ENCODE measurements at regions of chr12 and their contacts with region 1.

Region 1: GRCh38 chr12:48758221-48758620 is 30.7 kb downstream of the ADCY6 start:
- DNase-seq: no peak
- H3K4me3 ChIP-seq: no peak overlapping the region
- H3K27ac ChIP-seq: no peak overlapping the region
- H3K4me1 ChIP-seq: no peaks in the 10 kb centered on the region
- H3K27me3 ChIP-seq: peaks cover 0 to 3% of the 10 kb centered on the region in 2 experiments
- CTCF ChIP-seq: no peak
- POLR2A ChIP-seq: no peak

Region 2: GRCh38 chr12:48779869-48780268 is 21.6 kb after region 1 on chr12:
- CTCF ChIA-PET with region 1: interaction called, 15 read pairs
- POLR2A ChIA-PET with region 1: no interaction called
- dilution Hi-C with region 1: no loop called
- intact Hi-C with region 1: no loop called
- DNase-seq: peak; percentile 82
- H3K4me3 ChIP-seq: no peak overlapping the region
- H3K27ac ChIP-seq: peak overlapping the region; percentile 69
- H3K4me1 ChIP-seq: peaks cover 16% of the 10 kb centered on the region
- H3K27me3 ChIP-seq: no peaks in the 10 kb centered on the region
- CTCF ChIP-seq: no peak
- POLR2A ChIP-seq: no peak

Measured in endothelial cell of umbilical vein (primary cell).